Activated naive CD4-positive, alpha-beta T cell treated with anti-CD3 and anti-CD28 coated beads for 36 hours (primary cell): ENCODE measurements at regions of chr2 and their contacts with region 1.

Region 1: GRCh38 chr2:108988796-108989713 is at the start of gene EDAR:
- DNase-seq: peak; percentile 81
- H3K4me3 Mint-ChIP-seq: peak within 1 kb of the TSS; percentile 78
- H3K27ac Mint-ChIP-seq: peak within 1 kb of the TSS; percentile 47
- H3K4me1 Mint-ChIP-seq: peaks cover 56% of the 10 kb centered on the region
- H3K27me3 Mint-ChIP-seq: no peaks in the 10 kb centered on the region
- total RNA-seq, gene EDAR: 1.1 to 1.3 TPM

Region 2: DNA sequence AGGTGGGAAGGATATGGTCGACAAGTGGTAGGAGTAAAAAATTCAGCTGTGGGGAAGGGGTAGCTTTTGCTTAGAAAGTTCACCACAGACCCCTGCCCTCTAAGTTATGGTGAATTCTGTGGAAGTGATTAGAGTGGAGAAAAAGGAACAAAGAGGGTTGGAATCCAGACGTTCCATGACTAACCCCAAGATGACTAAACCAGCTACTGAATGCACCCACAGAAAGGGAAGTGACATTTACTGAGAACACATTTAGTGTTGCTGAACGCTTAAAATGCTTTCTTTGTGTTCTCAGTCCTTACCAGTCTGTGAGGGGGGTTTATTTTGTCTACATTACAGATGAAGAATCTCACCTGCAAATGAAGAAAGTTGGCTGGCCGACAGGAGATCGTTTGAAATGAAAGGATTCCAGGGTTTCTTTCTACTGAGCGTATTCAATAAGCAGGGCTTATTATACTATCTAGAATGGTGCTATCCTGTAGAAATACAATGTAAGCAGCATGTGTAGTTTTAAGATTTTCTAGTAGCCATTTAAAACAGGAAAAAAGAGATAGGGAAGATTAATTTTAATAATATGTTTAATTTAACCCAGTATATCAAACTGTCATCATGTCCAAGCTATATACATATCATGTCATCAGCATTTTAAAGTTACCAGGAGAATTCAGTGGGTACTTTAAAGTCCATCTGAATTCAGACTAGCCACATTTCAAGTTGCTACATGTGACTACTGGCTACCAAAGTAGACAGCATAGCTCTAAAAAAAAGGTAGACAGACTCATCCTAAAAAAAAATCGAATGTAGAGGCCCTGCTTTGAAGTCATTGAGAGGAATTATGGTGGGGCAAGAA is 394.7 kb before region 1 on chr2:
- CTCF ChIA-PET with region 1: no interaction called
- intact Hi-C with region 1: loop called (anchors 5 kb)
- DNase-seq: peak; percentile 30
- H3K4me3 Mint-ChIP-seq: peak overlapping the region; percentile 17
- H3K27ac Mint-ChIP-seq: no peak overlapping the region
- H3K4me1 Mint-ChIP-seq: peaks cover 49% of the 10 kb centered on the region
- H3K27me3 Mint-ChIP-seq: no peaks in the 10 kb centered on the region

Region 3: DNA sequence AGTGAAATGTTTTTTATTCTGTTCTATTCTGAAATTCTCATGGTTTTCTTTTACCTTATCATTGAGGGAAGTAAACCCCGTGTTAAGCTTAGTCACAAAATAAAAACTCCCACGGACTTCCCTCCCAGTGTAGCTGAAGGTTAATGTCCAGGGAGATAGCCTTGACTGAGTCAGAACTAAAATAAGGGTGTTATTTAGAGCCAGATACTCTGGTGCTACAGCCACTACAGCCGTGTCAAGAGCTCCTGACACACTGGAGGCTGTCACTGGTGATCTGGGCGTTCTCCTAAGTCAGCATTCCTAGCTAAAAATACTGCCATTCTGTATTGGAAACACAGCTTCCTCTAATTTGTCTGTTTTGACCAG is 351.8 kb before region 1 on chr2:
- CTCF ChIA-PET with region 1: no interaction called
- intact Hi-C with region 1: no loop called
- DNase-seq: no peak
- H3K4me3 Mint-ChIP-seq: no peak overlapping the region
- H3K27ac Mint-ChIP-seq: no peak overlapping the region
- H3K4me1 Mint-ChIP-seq: peaks cover 54% of the 10 kb centered on the region
- H3K27me3 Mint-ChIP-seq: no peaks in the 10 kb centered on the region

Region 4: DNA sequence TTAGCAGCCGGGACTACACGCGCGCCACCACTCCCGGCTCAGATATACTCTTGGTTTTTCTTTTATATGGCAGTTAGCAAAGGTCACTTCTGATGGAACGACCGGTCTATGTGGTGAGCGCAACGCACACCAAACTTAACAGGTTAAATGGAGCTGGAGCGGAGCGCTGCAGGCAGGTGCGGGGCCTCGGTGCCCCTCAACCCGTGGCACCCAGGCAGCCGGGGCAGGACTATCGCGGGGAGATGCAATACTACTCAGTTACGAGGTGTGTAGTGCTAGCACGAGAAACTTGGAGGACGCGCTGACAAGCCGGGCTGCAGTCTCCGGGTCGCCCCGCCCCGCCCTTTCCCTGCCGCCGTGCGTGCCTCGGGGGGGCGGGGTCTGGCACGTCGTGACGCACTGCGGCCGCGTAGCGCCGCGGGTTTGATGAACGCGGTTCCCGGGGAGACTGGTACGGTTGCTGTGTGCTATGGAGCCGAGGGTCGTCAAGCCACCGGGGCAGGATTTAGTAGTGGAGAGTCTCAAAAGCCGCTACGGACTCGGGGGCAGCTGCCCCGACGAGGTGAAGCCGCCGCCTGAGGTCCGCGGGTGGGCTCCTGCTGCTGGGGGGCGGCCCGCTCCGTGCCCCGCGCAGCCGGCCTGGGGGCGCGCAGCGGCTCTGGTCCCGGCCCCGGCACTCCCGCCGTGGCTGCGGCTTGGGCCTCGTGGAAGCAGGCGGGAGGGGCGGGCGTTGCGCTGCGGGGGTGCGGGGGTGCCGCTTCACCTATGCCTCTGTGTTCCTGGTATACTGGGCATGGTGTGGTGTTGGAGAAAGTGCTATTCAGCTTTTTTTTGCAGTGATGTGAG is 202.5 kb before region 1 on chr2 and contains the start of gene CCDC138:
- CTCF ChIA-PET with region 1: interaction called, 4 read pairs
- intact Hi-C with region 1: loop called (anchors 1 kb)
- DNase-seq: peak; percentile 92
- H3K4me3 Mint-ChIP-seq: peak within 1 kb of the TSS; percentile 97
- H3K27ac Mint-ChIP-seq: peak within 1 kb of the TSS; percentile 87
- H3K4me1 Mint-ChIP-seq: peaks cover 14% of the 10 kb centered on the region
- H3K27me3 Mint-ChIP-seq: no peaks in the 10 kb centered on the region
- total RNA-seq, gene CCDC138: 7.4 to 9.5 TPM

Region 5: GRCh38 chr2:108960006-108960405 is 29.0 kb before region 1 on chr2:
- CTCF ChIA-PET with region 1: interaction called, 7 read pairs
- intact Hi-C with region 1: loop called (anchors 1 kb)
- DNase-seq: no peak
- H3K4me3 Mint-ChIP-seq: no peak overlapping the region
- H3K27ac Mint-ChIP-seq: no peak overlapping the region
- H3K4me1 Mint-ChIP-seq: peaks cover 83% of the 10 kb centered on the region
- H3K27me3 Mint-ChIP-seq: no peaks in the 10 kb centered on the region

Region 6: DNA sequence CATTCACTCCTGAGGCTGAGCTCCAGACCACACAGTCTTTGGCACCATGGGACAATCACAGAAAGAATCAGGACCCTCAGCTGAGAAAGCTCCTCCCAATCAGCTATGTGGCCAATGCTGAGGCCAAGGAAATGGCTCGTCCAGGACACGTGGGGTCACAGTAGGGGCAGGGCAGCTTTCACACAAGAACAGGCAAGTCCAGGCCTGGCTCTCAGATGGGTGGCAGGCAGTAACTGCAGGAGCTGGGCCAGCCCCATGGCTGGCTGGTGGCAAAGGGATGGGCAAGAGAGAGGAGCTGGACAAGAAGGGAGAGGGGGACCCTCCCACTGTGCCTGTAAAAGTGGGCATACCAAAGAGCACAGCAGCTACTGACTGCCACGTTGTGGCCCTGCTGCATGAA is 12.1 kb after region 1 on chr2:
- CTCF ChIA-PET with region 1: interaction called, 11 read pairs
- intact Hi-C with region 1: no loop called
- DNase-seq: no peak
- H3K4me3 Mint-ChIP-seq: no peak overlapping the region
- H3K27ac Mint-ChIP-seq: no peak overlapping the region
- H3K4me1 Mint-ChIP-seq: peaks cover 18% of the 10 kb centered on the region
- H3K27me3 Mint-ChIP-seq: no peaks in the 10 kb centered on the region

Region 7: GRCh38 chr2:109284826-109285225 is 295.8 kb after region 1 on chr2:
- CTCF ChIA-PET with region 1: no interaction called
- intact Hi-C with region 1: no loop called
- DNase-seq: no peak
- H3K4me3 Mint-ChIP-seq: no peak overlapping the region
- H3K27ac Mint-ChIP-seq: no peak overlapping the region
- H3K4me1 Mint-ChIP-seq: peaks cover 2% of the 10 kb centered on the region
- H3K27me3 Mint-ChIP-seq: no peaks in the 10 kb centered on the region

Region 8: DNA sequence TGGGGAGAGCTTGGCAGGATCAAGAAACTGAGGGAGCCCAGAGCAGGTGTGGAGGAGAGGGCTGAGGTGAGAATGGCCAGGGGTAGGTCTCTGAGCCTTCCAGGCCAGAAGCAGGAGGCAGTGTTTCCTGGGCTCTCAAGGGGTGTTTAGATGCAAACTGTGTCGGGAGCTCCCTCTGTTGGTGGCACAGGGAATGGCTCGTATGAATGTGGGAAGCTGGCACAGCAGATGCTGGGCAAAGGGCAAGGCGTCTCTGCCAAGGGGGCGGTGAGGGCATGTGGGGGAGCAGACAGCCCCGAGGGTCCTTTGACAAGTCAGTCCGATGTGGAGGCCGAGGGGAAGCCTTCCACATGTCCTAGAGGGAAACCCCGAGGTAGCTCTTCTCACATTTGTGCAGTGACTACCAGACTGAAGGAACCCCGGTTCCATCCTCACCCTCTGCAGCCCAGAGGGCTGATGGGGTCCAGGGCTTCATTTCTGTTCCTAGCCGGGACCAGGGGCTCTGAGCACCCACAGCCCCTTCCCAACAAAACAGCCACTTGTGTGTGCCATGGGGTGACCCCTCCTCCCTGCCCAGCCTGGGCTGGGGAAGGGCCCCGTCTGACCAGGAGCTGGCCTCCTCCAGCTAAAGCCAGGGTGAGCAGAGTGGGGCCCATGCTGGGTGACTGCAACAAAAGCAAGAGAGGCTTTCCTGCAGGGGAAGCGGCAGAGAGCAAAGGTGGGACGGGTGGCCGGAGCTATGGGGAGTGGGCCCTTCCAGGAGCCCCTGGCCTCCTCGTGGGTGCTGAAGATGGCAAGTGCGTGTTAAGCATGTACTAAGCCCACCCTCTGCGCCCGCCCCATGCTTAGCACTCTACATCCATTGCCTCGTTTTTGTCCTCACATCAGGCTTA is 521.3 kb after region 1 on chr2:
- CTCF ChIA-PET with region 1: no interaction called
- intact Hi-C with region 1: loop called (anchors 5 kb)
- DNase-seq: peak; percentile 89
- H3K4me3 Mint-ChIP-seq: no peak overlapping the region
- H3K27ac Mint-ChIP-seq: no peak overlapping the region
- H3K4me1 Mint-ChIP-seq: peaks cover 3% of the 10 kb centered on the region
- H3K27me3 Mint-ChIP-seq: no peaks in the 10 kb centered on the region